Dendritic cell treated with granulocyte-macrophage colony-stimulating factor and Interleukin-4, amounts not matched to agents 40 ng/mL and 50 ng/mL, for 4 days (primary cell): ENCODE measurements at regions of chr11 and their contacts with region 1.

Region 1: DNA sequence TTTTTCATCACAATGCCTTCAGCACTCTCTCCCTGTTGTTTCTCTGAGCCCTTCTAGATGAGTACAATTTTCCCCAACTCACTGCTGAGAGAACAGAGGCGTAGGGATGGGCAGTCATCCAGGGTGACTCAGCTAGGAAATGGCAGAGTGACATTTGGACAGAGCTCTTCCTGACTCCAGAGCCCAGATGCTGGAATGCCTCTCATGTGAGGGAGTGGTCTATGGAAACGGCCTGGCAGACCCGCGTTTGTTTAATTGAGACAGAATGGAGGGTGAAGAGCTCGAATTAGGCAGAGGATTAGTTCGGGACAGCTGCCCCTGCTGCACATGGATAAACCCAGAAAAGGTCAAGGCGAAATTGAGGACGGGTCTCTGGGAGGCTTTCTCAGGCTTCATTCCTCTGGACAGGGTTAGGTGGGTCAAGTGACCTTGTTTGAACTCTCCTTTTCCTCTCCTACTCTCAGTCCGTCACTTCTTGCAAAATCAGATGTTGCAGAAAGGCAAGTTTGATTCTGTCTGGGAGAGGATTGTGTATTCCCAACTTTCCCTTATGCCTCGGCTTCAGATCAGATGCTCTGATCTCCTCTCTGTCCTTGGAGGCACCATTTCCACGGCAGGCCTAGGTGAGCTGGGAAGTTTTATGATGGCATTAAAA is 7.6 kb upstream of the LMO2 start:
- H3K4me3 Mint-ChIP-seq: no peak overlapping the region
- H3K27ac Mint-ChIP-seq: peak overlapping the region; percentile 38
- H3K4me1 Mint-ChIP-seq: peaks cover 53% of the 10 kb centered on the region
- H3K27me3 Mint-ChIP-seq: no peaks in the 10 kb centered on the region

Region 2: GRCh38 chr11:33542921-33543320 is 356.6 kb before region 1 on chr11:
- intact Hi-C with region 1: no loop called
- H3K4me3 Mint-ChIP-seq: no peak overlapping the region
- H3K27ac Mint-ChIP-seq: no peak overlapping the region
- H3K4me1 Mint-ChIP-seq: no peaks in the 10 kb centered on the region
- H3K27me3 Mint-ChIP-seq: peaks cover 18% of the 10 kb centered on the region

Region 3: DNA sequence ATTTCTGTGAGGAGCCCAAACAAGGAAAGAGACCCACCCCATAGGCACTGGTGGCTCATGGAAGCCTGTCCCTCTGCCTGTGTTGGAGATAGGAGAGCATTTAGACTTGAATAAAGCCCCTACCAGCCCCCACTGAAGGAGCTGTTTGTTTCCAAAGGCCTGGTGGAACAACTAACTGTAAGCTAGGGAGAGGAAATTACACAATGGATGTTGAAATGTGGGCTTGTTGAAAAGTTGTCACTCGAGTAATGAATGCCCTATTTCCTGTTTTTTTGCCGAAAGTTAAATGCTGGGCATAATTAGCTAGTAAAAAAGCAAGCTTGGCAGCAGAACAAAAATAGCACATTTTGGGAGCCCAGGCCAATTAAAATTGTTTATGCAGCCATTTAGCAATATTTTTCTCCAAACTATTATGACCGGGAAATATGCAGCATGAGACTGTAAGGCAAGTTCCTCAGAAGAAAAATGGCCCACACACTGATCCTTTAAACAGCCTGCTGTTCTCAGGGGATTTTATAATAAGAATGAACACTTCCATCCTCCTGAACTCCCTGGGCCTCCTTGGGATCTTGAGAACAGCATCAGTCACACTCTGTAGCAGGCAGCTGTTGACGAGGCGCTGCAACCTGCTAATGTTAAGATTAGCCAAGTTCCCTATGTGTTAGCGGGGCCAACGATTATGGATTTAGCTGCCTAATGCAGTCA is 31.0 kb after region 1 on chr11:
- intact Hi-C with region 1: loop called (anchors 5 kb)
- H3K4me3 Mint-ChIP-seq: peak overlapping the region; percentile 39
- H3K27ac Mint-ChIP-seq: peak overlapping the region; percentile 96
- H3K4me1 Mint-ChIP-seq: peaks cover 69% of the 10 kb centered on the region
- H3K27me3 Mint-ChIP-seq: no peaks in the 10 kb centered on the region

Region 4: GRCh38 chr11:34114471-34114870 is 215.0 kb after region 1 on chr11:
- intact Hi-C with region 1: no loop called
- H3K4me3 Mint-ChIP-seq: no peak overlapping the region
- H3K27ac Mint-ChIP-seq: no peak overlapping the region
- H3K4me1 Mint-ChIP-seq: no peaks in the 10 kb centered on the region
- H3K27me3 Mint-ChIP-seq: no peaks in the 10 kb centered on the region

Region 5: DNA sequence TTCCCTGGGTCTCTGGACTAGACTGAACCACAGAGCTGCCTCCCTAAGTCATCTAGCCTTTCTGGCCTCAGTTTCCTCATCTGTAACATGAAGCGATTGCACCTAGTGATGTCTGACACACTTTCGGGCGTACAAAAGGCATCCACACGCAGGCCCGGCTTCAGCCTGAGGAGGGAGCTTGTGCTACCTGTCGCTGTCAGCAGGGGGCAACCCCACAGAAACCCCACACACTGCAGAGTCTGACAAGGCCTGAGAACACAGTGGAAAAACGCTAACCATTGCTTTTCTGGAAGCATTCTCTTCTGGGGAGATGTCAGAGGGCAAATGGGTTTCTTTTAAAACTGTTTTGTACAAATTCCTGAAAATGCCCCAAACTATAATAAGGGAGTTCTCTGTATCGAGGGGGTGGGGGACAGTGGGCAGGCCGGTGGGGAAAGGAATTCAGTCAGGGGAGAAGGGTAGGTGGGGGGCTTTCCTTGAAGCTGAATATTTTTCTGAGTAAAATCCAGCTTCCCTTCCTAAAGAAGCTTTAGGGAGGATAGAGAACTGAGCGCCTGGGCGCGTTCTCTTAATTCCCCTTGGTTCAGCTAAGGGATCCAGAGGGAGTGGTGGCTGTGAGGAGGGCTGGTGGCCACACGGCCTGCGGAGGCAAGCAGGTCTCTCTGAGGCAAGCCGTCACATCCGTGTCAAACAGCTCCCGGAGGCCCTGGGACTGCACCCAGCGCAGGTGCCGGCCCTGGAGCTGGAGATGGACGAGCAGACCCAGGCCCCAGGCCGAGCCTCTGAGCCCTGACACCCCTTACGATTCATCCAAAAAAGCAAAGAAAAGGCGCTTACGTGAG is 613.6 kb after region 1 on chr11:
- intact Hi-C with region 1: no loop called
- H3K4me3 Mint-ChIP-seq: no peak overlapping the region
- H3K27ac Mint-ChIP-seq: no peak overlapping the region
- H3K4me1 Mint-ChIP-seq: peaks cover 67% of the 10 kb centered on the region
- H3K27me3 Mint-ChIP-seq: peaks cover 2% of the 10 kb centered on the region